GM10248 (cell line): ENCODE measurements at regions of chr1 and their contacts with region 1.

Region 1: DNA sequence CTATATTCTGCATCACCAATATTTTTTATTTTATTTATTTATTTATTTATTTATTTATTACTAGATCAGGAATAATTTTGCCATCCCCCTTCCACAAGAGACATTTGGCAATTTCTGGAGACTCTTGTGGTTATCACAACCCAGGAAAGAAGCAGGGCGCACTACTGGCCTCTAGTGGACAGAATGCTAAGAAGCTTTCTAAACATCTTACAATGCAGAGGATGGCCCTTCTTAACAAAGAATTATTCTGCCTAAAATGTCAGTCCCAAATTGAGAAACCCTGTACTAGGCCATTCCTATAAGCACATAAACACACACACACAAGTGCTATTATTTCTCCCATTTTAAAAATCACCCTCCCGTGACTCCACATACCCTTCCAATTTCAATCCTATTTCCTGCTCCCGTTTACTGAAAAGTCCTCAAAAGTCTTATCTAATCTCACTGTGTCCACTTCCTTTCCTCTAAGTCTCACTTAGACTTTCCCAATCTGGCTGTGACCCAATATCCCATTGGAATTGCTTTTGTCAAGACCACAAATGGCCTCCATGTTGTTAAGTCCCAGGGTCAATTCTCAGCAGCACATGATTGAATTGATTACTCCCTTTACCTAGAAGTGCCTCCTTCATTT is 43.7 kb upstream of the RNF11 start:
- DNase-seq: peak; percentile 43
- CTCF ChIP-seq: peak; percentile 77

Region 2: DNA sequence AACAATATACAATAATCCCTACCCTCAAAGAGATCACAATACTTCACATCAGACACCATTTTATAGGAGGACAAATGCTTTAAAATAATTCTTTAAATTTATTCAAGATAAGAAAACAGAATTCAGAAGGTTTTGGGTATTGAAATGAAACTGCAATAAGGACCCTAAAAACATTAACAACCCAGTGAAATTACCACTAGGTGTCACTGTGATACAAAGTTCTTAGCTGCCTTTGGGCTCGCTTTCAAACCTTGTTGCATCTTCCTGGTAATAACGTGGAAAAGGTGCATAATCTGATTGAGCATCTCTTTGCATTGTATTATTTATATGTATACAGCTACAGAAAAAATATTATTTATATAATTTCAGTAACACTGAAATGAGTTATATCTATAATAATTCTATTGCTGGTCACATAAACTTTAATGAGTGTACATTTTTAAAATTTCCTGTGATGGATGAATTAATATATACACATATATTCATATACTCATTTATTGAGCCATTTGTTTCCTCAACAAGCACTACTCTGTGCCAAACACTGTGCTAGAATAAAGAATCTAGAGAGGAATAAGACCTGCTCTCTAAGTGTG is 417.5 kb before region 1 on chr1:
- CTCF ChIA-PET with region 1: interaction called, 62 read pairs
- POLR2A ChIA-PET with region 1: no interaction called
- DNase-seq: peak; percentile 37
- CTCF ChIP-seq: peak; percentile 59

Region 3: GRCh38 chr1:50929376-50929958 is 262.9 kb before region 1 on chr1:
- CTCF ChIA-PET with region 1: interaction called, 28 read pairs
- POLR2A ChIA-PET with region 1: no interaction called
- DNase-seq: no peak
- CTCF ChIP-seq: peak; percentile 36

Region 4: GRCh38 chr1:51170342-51170741 is 22.0 kb before region 1 on chr1:
- CTCF ChIA-PET with region 1: interaction called, 13 read pairs
- POLR2A ChIA-PET with region 1: no interaction called
- DNase-seq: no peak
- CTCF ChIP-seq: no peak

Region 5: GRCh38 chr1:51214615-51215131 is 22.3 kb after region 1 on chr1:
- CTCF ChIA-PET with region 1: interaction called, 21 read pairs
- POLR2A ChIA-PET with region 1: no interaction called
- DNase-seq: no peak
- CTCF ChIP-seq: no peak

Region 6: DNA sequence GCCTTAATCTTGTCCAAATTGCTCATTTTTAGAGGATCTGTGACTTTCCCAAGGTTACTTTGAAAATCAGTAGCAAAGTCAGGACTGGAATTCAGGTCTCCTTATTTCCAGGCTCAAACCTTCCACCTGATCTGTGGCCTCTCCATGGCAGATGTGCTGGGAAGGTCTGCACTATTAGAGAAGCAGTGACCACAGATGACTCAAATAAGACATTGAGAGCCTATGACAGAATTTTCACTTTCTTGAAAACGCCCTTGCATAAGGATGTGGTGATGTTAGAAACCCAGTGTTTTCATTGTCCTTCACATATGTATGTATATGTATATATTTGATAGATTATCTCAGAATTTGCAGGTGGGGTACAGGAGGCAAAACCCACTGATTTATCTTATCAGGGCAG is 92.7 kb after region 1 on chr1:
- CTCF ChIA-PET with region 1: no interaction called
- POLR2A ChIA-PET with region 1: no interaction called
- DNase-seq: peak; percentile 73
- CTCF ChIP-seq: no peak

Region 7: DNA sequence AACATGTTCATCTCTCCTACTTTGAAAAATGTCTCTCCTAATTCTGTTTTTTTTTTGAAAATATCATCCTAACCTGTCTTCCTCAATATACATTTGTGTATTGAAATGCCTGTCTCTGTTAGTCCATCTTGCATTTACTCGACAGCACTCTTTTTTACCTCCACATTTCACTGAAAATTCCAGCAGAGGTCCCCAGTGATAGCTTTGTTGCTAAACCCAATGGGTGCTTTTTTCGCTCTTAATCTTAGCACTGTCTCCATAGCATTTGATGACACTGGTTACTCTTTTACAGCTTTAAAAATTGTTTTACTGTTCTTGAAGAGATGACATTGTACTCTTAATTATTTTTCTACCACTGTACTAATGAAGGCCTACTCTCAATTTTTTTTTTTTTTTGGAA is 435.4 kb after region 1 on chr1:
- CTCF ChIA-PET with region 1: no interaction called
- POLR2A ChIA-PET with region 1: no interaction called
- DNase-seq: peak; percentile 35
- CTCF ChIP-seq: peak; percentile 20